ENCODE measurements at regions of chr2 and their contacts with region 1.

Region 1: DNA sequence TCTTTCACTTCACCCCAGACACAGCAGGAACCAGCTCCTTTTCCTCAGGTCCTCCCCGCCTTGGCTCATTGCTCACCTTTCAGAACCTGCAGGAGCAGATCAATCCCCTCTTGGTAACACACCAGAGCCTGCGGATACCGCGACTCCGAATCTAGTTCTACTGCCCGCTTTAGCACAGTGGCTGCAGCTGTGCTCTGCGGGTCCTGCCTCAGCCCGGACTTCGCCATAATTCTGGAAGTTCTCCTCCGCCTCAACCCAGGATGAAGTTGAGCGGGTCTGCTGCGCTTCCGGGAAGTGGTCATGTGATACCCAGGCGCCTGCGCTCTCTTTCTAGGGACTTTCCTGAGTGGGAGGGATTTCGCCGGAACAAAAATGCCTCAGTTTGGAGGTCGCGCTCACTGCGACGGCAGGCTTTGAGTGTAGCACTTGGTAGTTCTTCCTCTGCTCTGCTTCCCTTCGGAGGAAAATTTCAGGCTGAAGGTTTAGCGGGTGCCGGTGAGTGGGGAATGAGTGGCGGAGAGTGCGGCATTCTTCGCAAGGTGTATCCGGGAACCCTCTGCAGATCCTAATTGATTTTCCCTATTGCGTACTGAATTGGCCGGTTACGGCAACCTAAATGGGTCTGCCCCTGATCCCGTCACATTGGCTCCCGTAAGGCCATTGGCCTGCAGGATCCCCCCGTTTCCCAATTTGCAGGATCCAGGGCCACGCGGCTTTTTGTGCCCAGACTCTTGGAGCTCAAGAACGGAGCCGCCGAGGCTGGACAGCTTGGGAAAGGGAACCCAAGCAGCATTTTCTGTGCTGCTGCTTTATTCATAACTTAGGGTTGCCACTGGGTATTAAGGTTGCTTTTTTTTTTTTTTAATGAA is at the starts of genes MITD1 and MRPL30:
- DNase-seq: peak; percentile 87
- H3K4me3 Mint-ChIP-seq: peak within 1 kb of the TSS; percentile 89
- H3K27ac Mint-ChIP-seq: peak within 1 kb of the TSS; percentile 88
- H3K4me1 Mint-ChIP-seq: peaks cover 44% of the 10 kb centered on the region
- H3K27me3 Mint-ChIP-seq: no peaks in the 10 kb centered on the region
- CTCF ChIP-seq: no peak
- total RNA-seq, gene MITD1: 28.6 and 29.9 TPM in 2 replicates
- total RNA-seq, gene MRPL30: 38.8 and 39.0 TPM in 2 replicates

Region 2: DNA sequence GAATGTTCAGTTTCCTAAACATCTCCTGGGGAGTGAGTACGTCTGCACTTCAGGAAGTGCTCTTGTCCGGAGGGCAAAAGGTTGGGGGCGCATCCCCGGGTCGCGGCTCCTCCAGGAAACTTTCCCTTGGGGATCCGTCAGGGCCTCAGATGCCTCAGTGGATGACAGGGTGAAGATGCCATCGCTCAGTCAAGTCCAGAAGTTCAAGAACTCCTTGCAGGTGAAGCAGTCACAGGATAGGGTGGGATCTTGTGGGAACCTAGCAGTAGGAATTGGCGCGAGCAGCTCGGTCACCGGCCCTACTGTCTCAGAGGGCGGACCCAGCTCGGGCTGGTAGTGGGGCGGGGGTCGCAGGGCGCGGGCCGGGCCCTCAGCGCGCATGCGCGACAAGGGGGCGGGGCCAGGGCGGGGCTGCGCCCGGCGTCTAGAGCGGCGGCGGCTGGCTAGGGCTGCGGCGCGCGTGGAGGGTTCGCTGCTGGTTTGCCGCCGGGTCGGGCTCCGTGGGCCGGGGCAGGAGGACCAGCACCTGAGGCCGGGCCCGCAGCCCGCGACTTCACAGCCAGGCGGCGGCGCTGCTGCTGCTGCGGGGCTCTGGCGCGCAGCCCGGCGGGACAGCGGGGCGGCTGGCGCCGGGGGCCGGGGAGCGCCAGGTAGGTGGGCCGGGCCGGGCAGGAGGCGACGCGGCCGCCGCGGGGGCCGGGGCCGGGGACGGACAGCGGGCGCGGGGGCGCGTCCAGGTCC is 736.4 kb before region 1 on chr2 and contains the start of gene INPP4A:
- CTCF ChIA-PET with region 1: no interaction called
- intact Hi-C with region 1: no loop called
- DNase-seq: peak; percentile 72
- H3K4me3 Mint-ChIP-seq: peak within 1 kb of the TSS; percentile 91
- H3K27ac Mint-ChIP-seq: peak within 1 kb of the TSS; percentile 68
- H3K4me1 Mint-ChIP-seq: peaks cover 44% of the 10 kb centered on the region
- H3K27me3 Mint-ChIP-seq: no peaks in the 10 kb centered on the region
- CTCF ChIP-seq: no peak
- total RNA-seq, gene INPP4A: 26.7 and 28.2 TPM in 2 replicates

Region 3: DNA sequence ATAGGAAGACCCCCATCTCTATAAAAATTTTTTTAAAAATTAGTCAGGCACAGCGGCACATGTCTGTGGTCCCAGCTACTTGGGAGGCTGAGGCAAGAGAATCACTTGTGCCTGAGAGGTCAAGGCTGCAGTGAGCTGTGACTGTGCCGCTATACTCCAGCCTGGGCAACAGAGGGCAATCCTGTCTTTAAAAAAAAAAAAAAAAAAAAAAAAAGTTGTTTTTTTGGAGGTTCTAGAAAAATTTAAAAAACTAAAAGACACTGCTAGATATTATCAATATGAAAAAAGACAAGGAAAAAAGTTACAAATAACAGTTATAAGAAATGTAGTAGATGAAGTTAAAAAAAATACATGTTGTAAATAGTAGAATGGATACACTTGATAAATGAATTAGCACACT is 95.6 kb before region 1 on chr2:
- CTCF ChIA-PET with region 1: no interaction called
- intact Hi-C with region 1: loop called (anchors 5 kb)
- DNase-seq: no peak
- H3K4me3 Mint-ChIP-seq: no peak overlapping the region
- H3K27ac Mint-ChIP-seq: no peak overlapping the region
- H3K4me1 Mint-ChIP-seq: no peaks in the 10 kb centered on the region
- H3K27me3 Mint-ChIP-seq: no peaks in the 10 kb centered on the region
- CTCF ChIP-seq: peak; percentile 20

Region 4: GRCh38 chr2:99198103-99199010 is 17.4 kb after region 1 on chr2:
- CTCF ChIA-PET with region 1: no interaction called
- intact Hi-C with region 1: no loop called
- DNase-seq: peak; percentile 4
- H3K4me3 Mint-ChIP-seq: no peak overlapping the region
- H3K27ac Mint-ChIP-seq: no peak overlapping the region
- H3K4me1 Mint-ChIP-seq: no peaks in the 10 kb centered on the region
- H3K27me3 Mint-ChIP-seq: no peaks in the 10 kb centered on the region
- CTCF ChIP-seq: no peak

Region 5: GRCh38 chr2:99337113-99338028 is 156.4 kb after region 1 on chr2 and contains the start of gene EIF5B:
- CTCF ChIA-PET with region 1: no interaction called
- intact Hi-C with region 1: loop called (anchors 2 kb)
- DNase-seq: peak; percentile 96
- H3K4me3 Mint-ChIP-seq: no peak within 1 kb of the TSS
- H3K27ac Mint-ChIP-seq: no peak within 1 kb of the TSS
- H3K4me1 Mint-ChIP-seq: peaks cover 4% of the 10 kb centered on the region
- H3K27me3 Mint-ChIP-seq: no peaks in the 10 kb centered on the region
- CTCF ChIP-seq: peak; percentile 66
- total RNA-seq, gene EIF5B: 60.1 and 63.1 TPM in 2 replicates

Region 6: GRCh38 chr2:99380376-99381010 is 199.5 kb after region 1 on chr2:
- CTCF ChIA-PET with region 1: no interaction called
- intact Hi-C with region 1: no loop called
- DNase-seq: no peak
- H3K4me3 Mint-ChIP-seq: no peak overlapping the region
- H3K27ac Mint-ChIP-seq: no peak overlapping the region
- H3K4me1 Mint-ChIP-seq: no peaks in the 10 kb centered on the region
- H3K27me3 Mint-ChIP-seq: no peaks in the 10 kb centered on the region
- CTCF ChIP-seq: no peak

Region 7: GRCh38 chr2:99489761-99490622 is 309.0 kb after region 1 on chr2 and contains the start of gene REV1:
- CTCF ChIA-PET with region 1: no interaction called
- intact Hi-C with region 1: loop called (anchors 5 kb)
- DNase-seq: peak; percentile 96
- H3K4me3 Mint-ChIP-seq: peak within 1 kb of the TSS; percentile 94
- H3K27ac Mint-ChIP-seq: peak within 1 kb of the TSS; percentile 97
- H3K4me1 Mint-ChIP-seq: peaks cover 26% of the 10 kb centered on the region
- H3K27me3 Mint-ChIP-seq: peaks cover 21% of the 10 kb centered on the region
- CTCF ChIP-seq: peak; percentile 75
- total RNA-seq, gene REV1: 38.7 and 49.0 TPM in 2 replicates